Naive thymus-derived CD4-positive, alpha-beta T cell (primary cell): ENCODE measurements at regions of chr12 and their contacts with region 1.

Region 1: DNA sequence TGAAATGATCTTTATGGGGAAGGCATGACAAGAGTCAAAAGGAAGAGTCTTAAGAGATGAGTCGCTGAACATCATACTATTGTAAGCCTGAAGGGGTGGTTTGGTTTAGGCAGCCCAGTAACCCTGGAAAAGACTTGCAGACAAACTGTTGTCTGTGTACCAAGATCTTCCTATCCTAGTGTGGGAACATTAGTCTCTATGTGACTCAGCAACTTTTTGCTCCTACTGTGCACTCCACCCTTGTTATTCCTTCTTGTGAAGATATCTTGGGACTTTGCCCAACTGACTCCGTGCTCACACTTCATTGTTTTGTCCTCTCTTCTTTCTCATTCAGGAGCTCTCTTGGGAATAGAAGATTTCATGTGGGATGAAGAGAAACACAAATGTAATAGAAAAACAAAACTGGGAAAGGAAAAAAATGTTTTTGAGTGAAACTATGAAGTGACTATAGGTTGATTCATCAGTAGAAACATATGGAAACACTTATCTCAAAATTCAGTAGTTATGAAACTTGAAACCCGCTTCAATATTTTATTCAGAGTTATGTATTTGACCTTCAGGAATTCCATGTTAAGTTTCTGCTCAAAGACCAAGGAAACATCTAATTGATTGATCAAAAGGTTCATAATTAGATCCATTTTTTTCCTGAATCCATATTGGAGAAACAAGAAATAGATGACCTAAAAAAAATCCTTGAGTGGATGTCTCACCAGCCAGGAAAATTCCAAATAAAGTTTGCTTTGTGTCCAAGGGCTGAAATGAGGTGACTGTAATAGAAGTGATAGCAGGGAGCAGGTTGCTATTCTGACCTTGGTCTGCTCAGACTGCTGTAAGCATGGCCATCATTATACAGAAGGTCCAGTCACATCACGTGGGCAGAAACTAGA is 67.2 kb downstream of the BTG1 start:
- DNase-seq: no peak
- ATAC-seq: peak; percentile 31
- H3K4me3 ChIP-seq: no peak overlapping the region
- H3K4me3 Mint-ChIP-seq: peak overlapping the region in 7 of 10 donors; percentile 12 to 88 (median 51)
- H3K27ac ChIP-seq: peak overlapping the region; percentile 5
- H3K27ac Mint-ChIP-seq: peak overlapping the region in 8 of 9 donors; percentile 83 to 96 (median 90)
- H3K4me1 ChIP-seq: peaks cover 10 to 45% of the 10 kb centered on the region in 2 donors
- H3K4me1 Mint-ChIP-seq: peaks cover 37 to 87% (median 79%) of the 10 kb centered on the region in 7 donors
- H3K27me3 ChIP-seq: no peaks in the 10 kb centered on the region
- H3K27me3 Mint-ChIP-seq: no peaks in the 10 kb centered on the region

Region 2: GRCh38 chr12:91542089-91542488 is 536.3 kb before region 1 on chr12:
- CTCF ChIA-PET with region 1: no interaction called
- POLR2A ChIA-PET with region 1: no interaction called
- intact Hi-C with region 1: no loop called
- DNase-seq: no peak
- ATAC-seq: no peak
- H3K4me3 ChIP-seq: no peak overlapping the region
- H3K4me3 Mint-ChIP-seq: no peak overlapping the region
- H3K27ac ChIP-seq: no peak overlapping the region
- H3K27ac Mint-ChIP-seq: no peak overlapping the region
- H3K4me1 ChIP-seq: no peaks in the 10 kb centered on the region
- H3K4me1 Mint-ChIP-seq: peaks cover 0 to 11% (median 6%) of the 10 kb centered on the region in 7 donors
- H3K27me3 ChIP-seq: no peaks in the 10 kb centered on the region
- H3K27me3 Mint-ChIP-seq: peaks cover 0 to 7% (median 0%) of the 10 kb centered on the region in 5 donors

Region 3: DNA sequence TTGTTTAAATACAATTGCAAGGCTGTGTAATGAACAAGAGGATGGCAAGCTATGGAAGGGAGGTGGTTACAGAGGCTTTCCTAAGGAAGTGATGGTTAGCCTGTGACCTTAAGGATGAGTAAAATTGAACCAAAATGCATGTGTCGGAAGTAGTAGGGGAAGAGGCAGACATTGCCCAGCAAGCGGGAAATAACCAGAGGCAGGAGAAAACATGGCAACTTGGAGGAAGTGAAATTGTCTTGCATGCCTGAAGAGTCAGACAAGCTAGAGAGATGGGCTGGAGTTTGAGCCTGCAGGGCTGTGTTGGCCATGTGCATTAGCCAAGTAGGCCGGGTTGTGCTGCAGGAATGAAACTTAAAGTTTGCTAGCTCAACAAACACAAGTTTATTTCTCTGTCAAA is 29.0 kb before region 1 on chr12:
- CTCF ChIA-PET with region 1: no interaction called
- POLR2A ChIA-PET with region 1: interaction called, 4 read pairs
- intact Hi-C with region 1: loop called in 1 of 2 experiments (anchors 5 kb)
- DNase-seq: no peak
- ATAC-seq: no peak
- H3K4me3 ChIP-seq: no peak overlapping the region
- H3K4me3 Mint-ChIP-seq: peak overlapping the region in 1 of 10 donors; percentile 34
- H3K27ac ChIP-seq: no peak overlapping the region
- H3K27ac Mint-ChIP-seq: peak overlapping the region in 4 of 9 donors; percentile 14 to 99 (median 74)
- H3K4me1 ChIP-seq: peaks cover 0 to 34% of the 10 kb centered on the region in 2 donors
- H3K4me1 Mint-ChIP-seq: peaks cover 26 to 89% (median 80%) of the 10 kb centered on the region in 7 donors
- H3K27me3 ChIP-seq: no peaks in the 10 kb centered on the region
- H3K27me3 Mint-ChIP-seq: no peaks in the 10 kb centered on the region

Region 4: GRCh38 chr12:92065018-92065499 is 13.4 kb before region 1 on chr12:
- CTCF ChIA-PET with region 1: interaction called, 3 read pairs
- POLR2A ChIA-PET with region 1: interaction called, 7 read pairs
- intact Hi-C with region 1: loop called in 1 of 2 experiments (anchors 1 kb)
- DNase-seq: peak in 2 of 9 donors; percentile 42 to 74
- ATAC-seq: peak; percentile 84
- H3K4me3 ChIP-seq: no peak overlapping the region
- H3K4me3 Mint-ChIP-seq: peak overlapping the region in 7 of 10 donors; percentile 3 to 58 (median 37)
- H3K27ac ChIP-seq: no peak overlapping the region
- H3K27ac Mint-ChIP-seq: peak overlapping the region in 6 of 9 donors; percentile 27 to 88 (median 52)
- H3K4me1 ChIP-seq: peaks cover 5 to 30% of the 10 kb centered on the region in 2 donors
- H3K4me1 Mint-ChIP-seq: peaks cover 18 to 75% (median 62%) of the 10 kb centered on the region in 7 donors
- H3K27me3 ChIP-seq: no peaks in the 10 kb centered on the region
- H3K27me3 Mint-ChIP-seq: no peaks in the 10 kb centered on the region

Region 5: GRCh38 chr12:92130999-92131398 is 52.6 kb after region 1 on chr12:
- CTCF ChIA-PET with region 1: no interaction called
- POLR2A ChIA-PET with region 1: interaction called, 10 read pairs
- intact Hi-C with region 1: loop called in 1 of 2 experiments (anchors 2 kb)
- DNase-seq: no peak
- ATAC-seq: no peak
- H3K4me3 ChIP-seq: peak overlapping the region; percentile 10
- H3K4me3 Mint-ChIP-seq: peak overlapping the region; percentile 79 to 100 (median 96)
- H3K27ac ChIP-seq: peak overlapping the region; percentile 91
- H3K27ac Mint-ChIP-seq: peak overlapping the region; percentile 87 to 100 (median 93)
- H3K4me1 ChIP-seq: peaks cover 49 to 78% of the 10 kb centered on the region in 2 donors
- H3K4me1 Mint-ChIP-seq: peaks cover 69 to 100% (median 86%) of the 10 kb centered on the region in 7 donors
- H3K27me3 ChIP-seq: no peaks in the 10 kb centered on the region
- H3K27me3 Mint-ChIP-seq: no peaks in the 10 kb centered on the region

Region 6: GRCh38 chr12:92158796-92159439 is 80.5 kb after region 1 on chr12:
- CTCF ChIA-PET with region 1: no interaction called
- POLR2A ChIA-PET with region 1: no interaction called
- intact Hi-C with region 1: no loop called
- DNase-seq: peak in 4 of 9 donors; percentile 32 to 58 (median 48)
- ATAC-seq: peak; percentile 84
- H3K4me3 ChIP-seq: peak overlapping the region; percentile 15
- H3K4me3 Mint-ChIP-seq: peak overlapping the region; percentile 49 to 87 (median 76)
- H3K27ac ChIP-seq: peak overlapping the region; percentile 70
- H3K27ac Mint-ChIP-seq: peak overlapping the region; percentile 65 to 99 (median 95)
- H3K4me1 ChIP-seq: peaks cover 0 to 46% of the 10 kb centered on the region in 2 donors
- H3K4me1 Mint-ChIP-seq: peaks cover 28 to 92% (median 78%) of the 10 kb centered on the region in 7 donors
- H3K27me3 ChIP-seq: no peaks in the 10 kb centered on the region
- H3K27me3 Mint-ChIP-seq: no peaks in the 10 kb centered on the region